Dendritic cell treated with granulocyte-macrophage colony-stimulating factor and Interleukin-4, amounts not matched to agents 40 ng/mL and 50 ng/mL, for 4 days (primary cell): ENCODE measurements at regions of chr15 and their contacts with region 1.

Region 1: GRCh38 chr15:45378149-45378912 is at the start of gene GATM:
- H3K4me3 Mint-ChIP-seq: peak within 1 kb of the TSS; percentile 82
- H3K27ac Mint-ChIP-seq: peak within 1 kb of the TSS; percentile 84
- H3K4me1 Mint-ChIP-seq: peaks cover 31% of the 10 kb centered on the region
- H3K27me3 Mint-ChIP-seq: peaks cover 68% of the 10 kb centered on the region

Region 2: GRCh38 chr15:45391746-45392583 is 13.6 kb after region 1 on chr15:
- intact Hi-C with region 1: loop called (anchors 1 kb)
- H3K4me3 Mint-ChIP-seq: no peak overlapping the region
- H3K27ac Mint-ChIP-seq: peak overlapping the region; percentile 85
- H3K4me1 Mint-ChIP-seq: peaks cover 40% of the 10 kb centered on the region
- H3K27me3 Mint-ChIP-seq: peaks cover 19% of the 10 kb centered on the region